Right cardiac atrium (tissue), 5 donors: ENCODE measurements at regions of chr2 and their contacts with region 1.

Region 1: GRCh38 chr2:19362755-19363473 is 4.5 kb upstream of the OSR1 start:
- DNase-seq: peak; percentile 82 to 90 (median 89)
- ATAC-seq: peak; percentile 58 to 61
- H3K4me3 ChIP-seq: peak overlapping the region; percentile 93
- H3K27ac ChIP-seq: peak overlapping the region; percentile 43
- H3K4me1 ChIP-seq: no peaks in the 10 kb centered on the region
- H3K27me3 ChIP-seq: no peaks in the 10 kb centered on the region

Region 2: GRCh38 chr2:18520451-18521425 is 842.2 kb before region 1 on chr2:
- intact Hi-C with region 1: loop called in 2 of 4 experiments (anchors 5 to 10 kb)
- DNase-seq: peak; percentile 86 to 95 (median 93)
- ATAC-seq: peak; percentile 84 to 89
- H3K4me3 ChIP-seq: no peak overlapping the region
- H3K27ac ChIP-seq: peak overlapping the region; percentile 84
- H3K4me1 ChIP-seq: no peaks in the 10 kb centered on the region
- H3K27me3 ChIP-seq: no peaks in the 10 kb centered on the region

Region 3: GRCh38 chr2:18749912-18750526 is 612.9 kb before region 1 on chr2:
- intact Hi-C with region 1: loop called (anchors 2 to 10 kb)
- DNase-seq: peak in 2 of 3 donors; percentile 47 to 56
- ATAC-seq: no peak
- H3K4me3 ChIP-seq: no peak overlapping the region
- H3K27ac ChIP-seq: no peak overlapping the region
- H3K4me1 ChIP-seq: no peaks in the 10 kb centered on the region
- H3K27me3 ChIP-seq: no peaks in the 10 kb centered on the region

Region 4: GRCh38 chr2:18883616-18884456 is 479.1 kb before region 1 on chr2:
- intact Hi-C with region 1: loop called in 1 of 4 experiments (anchors 10 kb)
- DNase-seq: no peak
- ATAC-seq: no peak
- H3K4me3 ChIP-seq: no peak overlapping the region
- H3K27ac ChIP-seq: no peak overlapping the region
- H3K4me1 ChIP-seq: no peaks in the 10 kb centered on the region
- H3K27me3 ChIP-seq: no peaks in the 10 kb centered on the region

Region 5: DNA sequence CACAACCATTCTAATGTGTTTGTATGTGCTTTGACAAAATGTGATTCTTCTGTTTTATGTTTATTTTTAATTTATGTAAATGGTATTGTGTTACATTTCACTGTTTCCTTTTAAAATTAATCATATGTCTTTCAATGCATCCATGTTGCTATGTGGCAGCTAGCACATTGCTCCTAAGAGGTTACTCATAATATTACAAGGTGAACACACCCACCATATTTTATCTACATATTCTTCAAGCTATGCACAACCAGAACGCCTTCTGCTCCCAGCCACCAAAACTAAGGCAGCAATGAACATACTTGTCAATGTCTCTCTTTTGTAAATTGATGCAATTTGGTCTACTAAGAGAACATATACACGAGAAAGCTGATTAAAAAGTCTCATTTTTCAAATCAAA is 156.1 kb after region 1 on chr2:
- intact Hi-C with region 1: no loop called
- DNase-seq: no peak
- ATAC-seq: no peak
- H3K4me3 ChIP-seq: no peak overlapping the region
- H3K27ac ChIP-seq: no peak overlapping the region
- H3K4me1 ChIP-seq: no peaks in the 10 kb centered on the region
- H3K27me3 ChIP-seq: no peaks in the 10 kb centered on the region

Region 6: GRCh38 chr2:19649785-19650380 is 287.0 kb after region 1 on chr2:
- intact Hi-C with region 1: loop called in 1 of 4 experiments (anchors 10 kb)
- DNase-seq: peak; percentile 47 to 56 (median 56)
- ATAC-seq: peak; percentile 88 to 91
- H3K4me3 ChIP-seq: no peak overlapping the region
- H3K27ac ChIP-seq: peak overlapping the region; percentile 80
- H3K4me1 ChIP-seq: peaks cover 4% of the 10 kb centered on the region
- H3K27me3 ChIP-seq: no peaks in the 10 kb centered on the region

Region 7: DNA sequence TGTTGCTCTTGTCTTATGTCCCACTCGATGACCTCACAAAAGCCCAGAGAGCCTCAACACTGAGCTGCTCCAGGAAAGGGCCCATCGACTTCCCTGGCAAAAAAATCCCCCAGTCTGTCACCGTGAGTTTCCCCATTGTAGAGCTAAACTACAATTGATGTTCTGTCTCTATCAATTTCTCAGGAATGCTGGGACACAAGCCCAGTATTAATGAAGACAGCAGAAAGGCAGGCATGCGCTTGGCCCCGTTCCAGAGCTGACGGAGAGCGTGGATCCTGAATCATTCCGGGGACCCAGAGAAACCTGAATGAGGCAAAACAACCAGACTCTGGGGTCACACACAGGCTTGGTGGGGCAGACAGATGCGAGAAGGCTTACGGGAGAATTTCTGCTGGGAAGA is 392.0 kb after region 1 on chr2:
- intact Hi-C with region 1: loop called in 1 of 4 experiments (anchors 10 kb)
- DNase-seq: peak in 1 of 3 donors; percentile 61
- ATAC-seq: no peak
- H3K4me3 ChIP-seq: no peak overlapping the region
- H3K27ac ChIP-seq: no peak overlapping the region
- H3K4me1 ChIP-seq: peaks cover 7% of the 10 kb centered on the region
- H3K27me3 ChIP-seq: no peaks in the 10 kb centered on the region

Region 8: DNA sequence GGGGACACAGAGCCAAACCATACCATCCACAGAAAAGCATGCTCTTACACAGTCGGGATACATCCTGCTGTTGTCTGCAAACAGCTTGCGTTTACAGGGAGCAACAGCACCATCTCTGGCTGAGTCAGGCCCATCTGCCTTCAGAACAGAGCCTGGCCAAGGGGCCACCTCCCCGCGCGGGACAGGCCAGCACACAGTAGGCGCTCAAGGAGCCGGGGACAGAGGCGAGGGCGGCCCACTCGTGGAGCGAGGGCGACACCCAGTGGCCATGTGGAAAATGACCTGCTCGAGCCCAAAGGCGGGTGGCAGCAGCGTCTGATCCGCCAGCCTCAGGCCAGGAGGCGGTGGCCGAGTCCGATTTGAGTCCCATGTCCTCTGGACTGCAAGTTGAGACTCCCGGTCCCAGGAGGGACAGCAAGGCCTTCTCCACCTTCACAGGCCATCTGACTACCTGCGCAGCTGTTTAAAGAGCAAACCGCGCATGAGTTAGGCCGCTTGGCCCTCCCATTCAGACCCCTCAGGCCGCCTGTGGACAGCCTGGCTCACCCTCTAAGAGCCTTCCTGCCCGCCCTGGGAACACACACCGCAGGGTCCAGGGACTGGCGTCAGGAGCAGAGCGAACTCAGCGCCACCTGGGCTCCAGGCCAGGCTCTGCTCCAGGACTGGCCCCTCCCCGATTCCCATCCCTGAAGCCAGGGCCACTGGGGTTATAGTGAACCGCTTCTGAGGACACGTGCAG is 500.6 kb after region 1 on chr2:
- intact Hi-C with region 1: loop called in 2 of 4 experiments (anchors 5 to 10 kb)
- DNase-seq: peak; percentile 69 to 89 (median 88)
- ATAC-seq: peak; percentile 86 to 87
- H3K4me3 ChIP-seq: no peak overlapping the region
- H3K27ac ChIP-seq: no peak overlapping the region
- H3K4me1 ChIP-seq: no peaks in the 10 kb centered on the region
- H3K27me3 ChIP-seq: no peaks in the 10 kb centered on the region